HepG2 (cell line): ENCODE measurements at regions of chr2 and their contacts with region 1.

Region 1: GRCh38 chr2:75896779-75897366 is 186.2 kb upstream of the GCFC2 start:
- DNase-seq: peak; percentile 60
- ATAC-seq: peak; percentile 100
- H3K4me3 ChIP-seq: no peak overlapping the region
- H3K27ac ChIP-seq: no peak overlapping the region
- H3K4me1 ChIP-seq: no peaks in the 10 kb centered on the region
- H3K27me3 ChIP-seq: no peaks in the 10 kb centered on the region
- CTCF ChIP-seq: peak; percentile 88
- EP300 ChIP-seq: no peak
- POLR2A ChIP-seq: no peak
- RAD21 ChIP-seq: peak; percentile 54

Region 2: GRCh38 chr2:75800456-75800855 is 96.4 kb before region 1 on chr2:
- CTCF ChIA-PET with region 1: no interaction called
- POLR2A ChIA-PET with region 1: no interaction called
- in situ Hi-C with region 1: loop called (anchors 5 kb)
- intact Hi-C with region 1: no loop called
- DNase-seq: no peak
- ATAC-seq: no peak
- H3K4me3 ChIP-seq: no peak overlapping the region
- H3K27ac ChIP-seq: no peak overlapping the region
- H3K4me1 ChIP-seq: no peaks in the 10 kb centered on the region
- H3K27me3 ChIP-seq: peaks cover 0 to 4% of the 10 kb centered on the region in 2 experiments; a peak in 1 of 5 replicates
- CTCF ChIP-seq: no peak
- EP300 ChIP-seq: no peak
- POLR2A ChIP-seq: no peak
- RAD21 ChIP-seq: no peak

Region 3: DNA sequence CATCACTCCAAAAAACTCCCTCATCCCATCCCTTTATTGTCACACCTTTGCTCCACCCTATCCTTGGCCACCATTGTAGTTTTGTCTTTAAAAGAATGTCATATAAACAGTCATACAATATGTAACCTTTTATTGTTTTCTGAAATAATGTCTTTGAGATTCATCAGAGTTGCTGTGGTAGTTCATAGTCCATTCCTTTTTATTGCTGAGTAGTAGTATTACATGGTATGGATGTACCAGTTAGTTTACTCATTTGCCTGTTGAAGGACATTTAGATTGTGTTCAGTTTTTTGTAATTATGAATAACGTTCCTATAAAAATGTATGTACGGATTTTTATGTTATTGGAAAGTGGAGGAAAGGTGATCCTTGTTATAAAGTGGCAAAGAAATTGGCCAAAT is 14.3 kb before region 1 on chr2:
- CTCF ChIA-PET with region 1: no interaction called
- POLR2A ChIA-PET with region 1: no interaction called
- in situ Hi-C with region 1: no loop called
- intact Hi-C with region 1: loop called (anchors 2 kb)
- DNase-seq: no peak
- ATAC-seq: no peak
- H3K4me3 ChIP-seq: no peak overlapping the region
- H3K27ac ChIP-seq: no peak overlapping the region
- H3K4me1 ChIP-seq: no peaks in the 10 kb centered on the region
- H3K27me3 ChIP-seq: no peaks in the 10 kb centered on the region
- CTCF ChIP-seq: no peak
- EP300 ChIP-seq: no peak
- POLR2A ChIP-seq: no peak
- RAD21 ChIP-seq: no peak